Heart left ventricle (tissue), 16 donors: ENCODE measurements at regions of chr7 and their contacts with region 1.

Region 1: GRCh38 chr7:145050415-145050814 is 214.6 kb upstream of the TPK1 start:
- DNase-seq: no peak
- ATAC-seq: no peak
- H3K4me3 ChIP-seq: no peak overlapping the region
- H3K27ac ChIP-seq: no peak overlapping the region
- H3K4me1 ChIP-seq: no peaks in the 10 kb centered on the region
- H3K27me3 ChIP-seq: no peaks in the 10 kb centered on the region
- CTCF ChIP-seq: no peak
- POLR2A ChIP-seq: no peak

Region 2: DNA sequence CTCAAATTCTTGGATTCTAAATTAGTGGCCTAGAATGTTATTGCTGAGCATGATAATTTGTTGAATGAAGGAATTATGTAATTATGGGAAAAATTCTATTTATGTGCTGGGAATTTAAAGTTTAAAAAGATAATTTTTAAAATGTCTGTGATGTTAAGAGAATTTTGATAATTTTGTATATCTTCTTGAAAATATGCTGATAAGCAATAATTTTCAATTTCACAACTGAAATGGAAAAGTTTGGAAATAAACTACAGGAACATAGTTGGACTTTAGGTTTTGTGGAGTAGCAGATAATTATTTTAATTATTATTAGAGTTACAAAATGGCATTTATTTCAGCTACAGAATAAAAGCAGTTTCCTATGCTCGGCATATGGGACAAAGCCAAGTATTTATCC is 54.0 kb after region 1 on chr7:
- intact Hi-C with region 1: loop called in 1 of 10 experiments (anchors 5 kb)
- DNase-seq: no peak
- ATAC-seq: no peak
- H3K4me3 ChIP-seq: no peak overlapping the region
- H3K27ac ChIP-seq: no peak overlapping the region
- H3K4me1 ChIP-seq: peaks cover 0 to 3% (median 0%) of the 10 kb centered on the region in 12 donors
- H3K27me3 ChIP-seq: no peaks in the 10 kb centered on the region
- CTCF ChIP-seq: no peak
- POLR2A ChIP-seq: no peak